ENCODE measurements at regions of chr3 and their contacts with region 1.

Region 1: DNA sequence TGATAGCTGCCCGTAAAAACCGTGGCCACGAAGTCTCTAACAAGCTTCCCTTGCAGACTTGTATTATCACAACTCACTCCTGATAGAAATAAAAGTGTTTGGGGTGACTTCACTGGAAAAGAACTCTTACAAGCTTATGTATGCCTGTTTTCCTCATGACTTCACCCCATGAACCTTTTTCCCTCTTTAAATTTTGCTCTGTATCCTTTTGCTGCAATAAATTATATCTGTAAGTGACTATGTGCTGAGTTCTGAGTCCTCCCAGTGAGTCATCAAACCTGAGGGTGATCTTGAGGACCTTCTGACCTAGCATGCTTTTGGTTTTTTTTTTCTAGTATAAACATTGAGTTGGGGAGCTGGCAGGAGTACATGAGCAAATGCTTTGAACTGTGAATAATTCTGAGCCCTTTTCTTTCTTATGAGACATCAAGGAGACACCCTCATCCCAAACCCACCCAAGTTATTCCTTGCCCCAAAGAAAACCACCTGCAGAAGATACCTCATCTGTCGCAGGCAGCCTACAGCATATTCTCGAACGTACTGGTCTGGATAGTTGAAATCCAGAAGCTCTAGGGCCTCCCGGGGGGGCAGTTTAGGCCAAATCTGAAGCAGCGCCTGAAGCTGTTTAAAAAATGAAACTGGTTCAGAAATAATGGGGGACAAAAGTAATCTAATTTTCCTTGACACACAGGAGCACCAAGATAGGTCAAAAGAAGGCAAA is 85.9 kb downstream of the FAIM start:
- DNase-seq: no peak
- H3K4me3 ChIP-seq: no peak overlapping the region
- H3K27ac ChIP-seq: no peak overlapping the region
- H3K4me1 ChIP-seq: peaks cover 0 to 8% (median 0%) of the 10 kb centered on the region in 4 donors
- H3K27me3 ChIP-seq: no peaks in the 10 kb centered on the region
- CTCF ChIP-seq: no peak

Region 2: DNA sequence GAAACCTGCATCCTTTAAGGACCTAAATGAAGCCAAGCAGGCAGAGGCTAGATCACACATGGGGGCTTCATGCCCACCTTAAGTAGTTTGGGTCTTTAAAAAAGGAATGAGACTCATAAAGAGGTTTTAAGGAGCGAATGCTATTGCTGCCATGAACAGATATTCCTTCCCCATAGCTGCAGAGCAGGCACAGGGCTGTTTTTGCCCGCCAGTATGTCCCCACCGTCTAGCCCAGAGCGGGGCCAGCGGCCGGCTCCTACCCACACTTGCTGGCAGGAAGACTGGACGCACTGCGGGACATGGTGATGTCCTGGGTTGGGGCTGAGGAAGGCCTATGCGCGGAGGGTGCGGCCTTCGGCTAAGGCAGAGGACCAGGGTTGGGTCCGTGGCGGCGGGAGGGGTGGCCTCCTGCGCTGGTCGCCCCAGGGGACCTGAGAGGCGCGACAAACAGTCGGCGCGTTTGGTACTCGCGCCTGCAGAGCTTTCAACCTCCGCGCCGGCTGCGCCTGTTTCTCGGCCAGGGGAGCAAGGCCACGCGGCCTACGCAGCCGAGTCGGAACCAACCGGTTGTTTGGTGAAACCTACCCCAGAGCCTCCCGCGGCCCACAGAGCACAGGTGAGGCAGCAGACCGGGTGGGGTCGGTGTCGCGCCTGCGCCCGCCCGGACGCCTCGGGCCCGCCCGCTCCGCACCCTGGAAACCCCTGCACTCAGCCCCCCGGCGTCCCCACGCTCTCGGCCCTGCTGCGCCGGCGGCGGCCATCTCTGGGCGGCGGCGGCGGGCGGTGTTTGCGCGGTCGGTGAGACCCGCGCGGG is 85.9 kb before region 1 on chr3 and contains the start of gene FAIM:
- intact Hi-C with region 1: loop called (anchors 10 kb)
- DNase-seq: peak; percentile 61 to 86
- H3K4me3 ChIP-seq: peak within 1 kb of the TSS; percentile 77 to 84
- H3K27ac ChIP-seq: peak within 1 kb of the TSS; percentile 95 to 98
- H3K4me1 ChIP-seq: peaks cover 0 to 14% (median 6%) of the 10 kb centered on the region in 4 donors
- H3K27me3 ChIP-seq: no peaks in the 10 kb centered on the region
- CTCF ChIP-seq: no peak

Region 3: DNA sequence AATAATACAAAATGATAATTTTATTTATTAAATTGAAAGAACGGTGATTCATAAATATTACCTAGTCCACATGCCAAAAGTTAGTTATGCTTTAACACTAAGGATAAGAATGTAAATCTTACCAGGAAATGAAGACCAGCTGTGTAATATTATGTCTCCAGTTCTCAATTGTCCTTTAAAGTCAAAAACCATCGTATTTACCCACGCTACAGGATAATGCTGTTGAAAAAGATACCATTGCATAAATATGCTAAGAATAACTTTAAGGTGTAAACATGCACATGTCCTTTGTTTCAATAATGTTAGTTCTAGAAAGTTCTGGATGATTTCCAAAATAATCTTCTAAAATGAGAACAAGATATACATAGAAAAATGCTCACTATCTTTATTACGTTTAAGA is 17.6 kb after region 1 on chr3:
- intact Hi-C with region 1: loop called (anchors 2 kb)
- DNase-seq: no peak
- H3K4me3 ChIP-seq: no peak overlapping the region
- H3K27ac ChIP-seq: no peak overlapping the region
- H3K4me1 ChIP-seq: no peaks in the 10 kb centered on the region
- H3K27me3 ChIP-seq: no peaks in the 10 kb centered on the region
- CTCF ChIP-seq: no peak